Activated T-helper 1 cell treated with anti-CD3 and anti-CD28 coated beads, Interleukin-12 subunit alpha, Interleukin-12 subunit beta, Interleukin-2, Interleukin-4 antibody, amounts not matched to agents 30 ng/mL and 10 ng/mL and 1 ng/mL, durations not matched to agents 14 hours and 24 hours and 36 hours (primary cell): ENCODE measurements at regions of chr2 and their contacts with region 1.

Region 1: DNA sequence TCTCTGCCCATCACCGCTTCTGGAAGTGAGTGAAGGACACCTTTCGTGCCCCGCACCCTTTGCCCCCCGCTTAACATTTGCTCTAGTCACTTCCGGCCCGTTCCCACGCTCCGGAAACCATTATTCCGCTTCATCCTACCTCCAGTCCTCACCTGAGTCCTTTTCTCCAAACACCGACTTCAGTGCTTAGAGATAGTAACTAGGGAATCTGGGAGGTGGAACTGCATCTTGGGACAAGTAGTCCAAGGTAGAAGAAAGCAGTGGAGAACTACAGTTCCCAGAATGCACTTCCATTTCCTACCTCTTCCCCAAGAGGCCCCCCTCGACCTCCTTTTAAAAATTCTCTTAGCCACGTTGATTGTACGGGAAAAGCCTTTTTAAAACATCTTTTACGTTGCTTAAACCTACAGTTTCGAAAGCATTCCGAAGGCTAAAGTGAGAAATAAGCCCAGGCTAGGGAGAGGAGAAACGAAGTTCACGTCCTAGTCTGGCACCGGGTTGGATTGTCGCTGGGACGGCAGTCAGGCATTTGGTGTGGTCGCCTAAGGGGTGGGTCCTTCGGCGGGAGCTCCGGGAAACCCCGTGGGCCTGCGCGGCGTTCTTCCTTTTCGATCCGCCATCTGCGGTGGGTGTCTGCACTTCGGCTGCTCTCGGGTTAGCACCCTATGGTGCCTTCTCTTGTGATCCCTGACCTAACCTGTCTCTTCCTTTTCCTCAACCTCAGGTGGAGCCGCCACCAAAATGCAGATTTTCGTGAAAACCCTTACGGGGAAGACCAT is at the starts of genes CLHC1 and RPS27A:
- DNase-seq: peak; percentile 89
- H3K4me3 Mint-ChIP-seq: peak within 1 kb of the TSS; percentile 100
- H3K27ac Mint-ChIP-seq: peak within 1 kb of the TSS; percentile 97
- H3K4me1 Mint-ChIP-seq: peaks cover 63% of the 10 kb centered on the region
- H3K27me3 Mint-ChIP-seq: no peaks in the 10 kb centered on the region
- total RNA-seq, gene CLHC1: 9.0 and 12.3 TPM in 2 replicates
- total RNA-seq, gene RPS27A: 949 and 953 TPM in 2 replicates

Region 2: DNA sequence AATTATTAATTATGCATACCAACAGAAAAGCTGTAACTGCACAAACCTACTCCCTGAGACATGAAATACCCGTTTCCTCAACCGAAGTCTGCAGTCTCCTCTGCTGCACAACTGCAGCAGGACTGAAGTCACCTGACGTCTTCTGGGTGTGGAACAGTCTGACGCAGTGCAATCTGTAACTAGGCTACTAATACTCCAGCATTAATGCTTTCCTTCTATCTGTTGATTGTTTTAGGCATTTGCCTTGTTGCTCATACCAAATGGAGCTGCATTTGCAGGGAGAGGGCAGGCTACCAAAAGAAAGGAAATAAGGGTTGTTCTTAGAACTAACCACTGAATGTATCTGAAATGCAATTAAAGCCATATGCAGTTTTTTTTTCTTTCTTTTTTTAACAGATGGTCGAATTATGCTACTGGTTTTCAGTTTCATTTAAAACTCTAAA is 222.1 kb before region 1 on chr2:
- intact Hi-C with region 1: loop called (anchors 10 kb)
- DNase-seq: peak; percentile 20
- H3K4me3 Mint-ChIP-seq: peak overlapping the region; percentile 83
- H3K27ac Mint-ChIP-seq: peak overlapping the region; percentile 35
- H3K4me1 Mint-ChIP-seq: peaks cover 42% of the 10 kb centered on the region
- H3K27me3 Mint-ChIP-seq: no peaks in the 10 kb centered on the region

Region 3: GRCh38 chr2:55133467-55134315 is 98.6 kb before region 1 on chr2:
- intact Hi-C with region 1: loop called (anchors 2 kb)
- DNase-seq: peak; percentile 58
- H3K4me3 Mint-ChIP-seq: peak overlapping the region; percentile 82
- H3K27ac Mint-ChIP-seq: peak overlapping the region; percentile 97
- H3K4me1 Mint-ChIP-seq: peaks cover 31% of the 10 kb centered on the region
- H3K27me3 Mint-ChIP-seq: no peaks in the 10 kb centered on the region

Region 4: GRCh38 chr2:55204950-55205349 is 27.3 kb before region 1 on chr2:
- intact Hi-C with region 1: no loop called
- DNase-seq: no peak
- H3K4me3 Mint-ChIP-seq: no peak overlapping the region
- H3K27ac Mint-ChIP-seq: no peak overlapping the region
- H3K4me1 Mint-ChIP-seq: no peaks in the 10 kb centered on the region
- H3K27me3 Mint-ChIP-seq: no peaks in the 10 kb centered on the region

Region 5: DNA sequence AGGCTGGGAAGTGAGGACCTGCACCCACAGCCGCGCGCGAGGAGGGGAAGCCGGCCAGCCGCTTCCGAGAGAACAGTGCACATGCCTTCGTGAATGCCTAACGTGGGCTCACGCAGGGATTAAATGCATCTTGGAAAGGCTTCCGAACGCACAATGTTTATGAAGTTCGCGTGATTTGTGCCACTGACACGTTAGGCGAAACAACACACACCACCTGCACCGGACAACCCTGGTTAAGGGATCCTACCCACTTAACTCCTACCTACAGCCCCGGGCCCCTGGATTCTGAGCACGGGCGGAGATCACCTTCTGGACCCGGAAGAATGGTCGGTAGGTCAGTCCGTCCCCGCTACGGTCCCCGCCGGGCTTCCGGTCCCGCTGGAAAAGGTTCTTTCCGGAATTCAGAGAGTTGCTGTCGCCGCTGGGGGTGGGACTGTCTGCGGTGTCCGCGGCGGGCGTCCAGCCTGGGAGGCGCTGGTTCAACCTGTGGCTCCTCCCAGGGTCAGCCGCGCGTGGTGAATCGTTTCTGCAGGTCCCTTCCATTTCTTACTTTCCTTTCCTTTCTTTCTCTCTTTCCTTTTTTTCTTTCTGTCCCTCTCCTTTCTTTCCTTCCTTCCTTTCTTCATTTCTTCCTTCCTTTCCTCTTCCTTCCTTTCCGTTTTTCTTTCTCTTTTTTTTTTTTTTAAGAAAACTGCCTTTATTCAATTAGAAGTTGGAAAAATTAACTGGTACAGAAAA is 36.8 kb after region 1 on chr2 and contains the start of gene MTIF2:
- intact Hi-C with region 1: loop called (anchors 1 kb)
- DNase-seq: peak; percentile 87
- H3K4me3 Mint-ChIP-seq: peak within 1 kb of the TSS; percentile 93
- H3K27ac Mint-ChIP-seq: peak within 1 kb of the TSS; percentile 85
- H3K4me1 Mint-ChIP-seq: peaks cover 14% of the 10 kb centered on the region
- H3K27me3 Mint-ChIP-seq: no peaks in the 10 kb centered on the region
- total RNA-seq, gene MTIF2: 42.3 and 44.1 TPM in 2 replicates

Region 6: GRCh38 chr2:55282110-55282917 is 50.0 kb after region 1 on chr2:
- intact Hi-C with region 1: loop called (anchors 2 kb)
- DNase-seq: peak; percentile 85
- H3K4me3 Mint-ChIP-seq: peak overlapping the region; percentile 89
- H3K27ac Mint-ChIP-seq: peak overlapping the region; percentile 93
- H3K4me1 Mint-ChIP-seq: peaks cover 12% of the 10 kb centered on the region
- H3K27me3 Mint-ChIP-seq: peaks cover 2% of the 10 kb centered on the region

Region 7: GRCh38 chr2:55431982-55432627 is 199.8 kb after region 1 on chr2:
- intact Hi-C with region 1: loop called (anchors 1 kb)
- DNase-seq: no peak
- H3K4me3 Mint-ChIP-seq: no peak overlapping the region
- H3K27ac Mint-ChIP-seq: no peak overlapping the region
- H3K4me1 Mint-ChIP-seq: peaks cover 11% of the 10 kb centered on the region
- H3K27me3 Mint-ChIP-seq: peaks cover 9% of the 10 kb centered on the region